HepG2 (cell line): ENCODE measurements at regions of chrX and their contacts with region 1.

Region 1: GRCh38 chrX:10119399-10119990 is 37.3 kb upstream of the CLCN4 start:
- DNase-seq: peak; percentile 64
- ATAC-seq: no peak
- H3K4me3 ChIP-seq: no peak overlapping the region
- H3K27ac ChIP-seq: no peak overlapping the region
- H3K4me1 ChIP-seq: no peaks in the 10 kb centered on the region
- H3K27me3 ChIP-seq: no peaks in the 10 kb centered on the region
- CTCF ChIP-seq: peak; percentile 98
- EP300 ChIP-seq: 0 out of 4 replicates have a peak, but pooled peaks of 1 of the 2 experiments have one; percentile 27
- POLR2A ChIP-seq: no peak
- RAD21 ChIP-seq: peak; percentile 99

Region 2: GRCh38 chrX:9171841-9172463 is 947.5 kb before region 1 on chrX:
- CTCF ChIA-PET with region 1: no interaction called
- POLR2A ChIA-PET with region 1: no interaction called
- in situ Hi-C with region 1: no loop called
- intact Hi-C with region 1: no loop called
- DNase-seq: no peak
- ATAC-seq: no peak
- H3K4me3 ChIP-seq: no peak overlapping the region
- H3K27ac ChIP-seq: no peak overlapping the region
- H3K4me1 ChIP-seq: no peaks in the 10 kb centered on the region
- H3K27me3 ChIP-seq: no peaks in the 10 kb centered on the region
- CTCF ChIP-seq: no peak
- EP300 ChIP-seq: no peak
- POLR2A ChIP-seq: no peak
- RAD21 ChIP-seq: no peak

Region 3: GRCh38 chrX:9873952-9874351 is 245.5 kb before region 1 on chrX:
- CTCF ChIA-PET with region 1: interaction called, 76 read pairs
- POLR2A ChIA-PET with region 1: no interaction called
- in situ Hi-C with region 1: no loop called
- intact Hi-C with region 1: loop called (anchors 2 kb)
- DNase-seq: peak; percentile 24
- ATAC-seq: peak; percentile 75
- H3K4me3 ChIP-seq: no peak overlapping the region
- H3K27ac ChIP-seq: no peak overlapping the region
- H3K4me1 ChIP-seq: no peaks in the 10 kb centered on the region
- H3K27me3 ChIP-seq: no peaks in the 10 kb centered on the region
- CTCF ChIP-seq: peak; percentile 63
- EP300 ChIP-seq: no peak
- POLR2A ChIP-seq: no peak
- RAD21 ChIP-seq: no peak

Region 4: GRCh38 chrX:9988762-9989161 is 130.7 kb before region 1 on chrX:
- CTCF ChIA-PET with region 1: interaction called, 696 read pairs
- POLR2A ChIA-PET with region 1: no interaction called
- in situ Hi-C with region 1: no loop called
- intact Hi-C with region 1: no loop called
- DNase-seq: no peak
- ATAC-seq: no peak
- H3K4me3 ChIP-seq: no peak overlapping the region
- H3K27ac ChIP-seq: no peak overlapping the region
- H3K4me1 ChIP-seq: no peaks in the 10 kb centered on the region
- H3K27me3 ChIP-seq: no peaks in the 10 kb centered on the region
- CTCF ChIP-seq: peak; percentile 48
- EP300 ChIP-seq: no peak
- POLR2A ChIP-seq: no peak
- RAD21 ChIP-seq: 0 out of 2 replicates have a peak, but pooled peaks have one; percentile 21

Region 5: GRCh38 chrX:10007621-10008020 is 111.9 kb before region 1 on chrX:
- CTCF ChIA-PET with region 1: interaction called, 13 read pairs
- POLR2A ChIA-PET with region 1: no interaction called
- in situ Hi-C with region 1: no loop called
- intact Hi-C with region 1: no loop called
- DNase-seq: no peak
- ATAC-seq: peak; percentile 32
- H3K4me3 ChIP-seq: no peak overlapping the region
- H3K27ac ChIP-seq: no peak overlapping the region
- H3K4me1 ChIP-seq: peaks cover 75% of the 10 kb centered on the region
- H3K27me3 ChIP-seq: no peaks in the 10 kb centered on the region
- CTCF ChIP-seq: no peak
- EP300 ChIP-seq: no peak
- POLR2A ChIP-seq: no peak
- RAD21 ChIP-seq: no peak

Region 6: GRCh38 chrX:10156199-10157031 is 36.9 kb after region 1 on chrX and contains the start of gene CLCN4:
- CTCF ChIA-PET with region 1: interaction called, 11 read pairs
- POLR2A ChIA-PET with region 1: no interaction called
- in situ Hi-C with region 1: no loop called
- intact Hi-C with region 1: no loop called
- DNase-seq: peak; percentile 67
- ATAC-seq: peak; percentile 99
- H3K4me3 ChIP-seq: peak within 1 kb of the TSS; percentile 62 to 70 (median 66)
- H3K27ac ChIP-seq: peak within 1 kb of the TSS; percentile 85
- H3K4me1 ChIP-seq: peaks cover 30% of the 10 kb centered on the region
- H3K27me3 ChIP-seq: no peaks in the 10 kb centered on the region
- CTCF ChIP-seq: no peak
- EP300 ChIP-seq: no peak
- POLR2A ChIP-seq: peak; percentile 74 to 76
- RAD21 ChIP-seq: no peak
- total RNA-seq, gene CLCN4: 2.5 and 2.6 TPM in 2 replicates

Region 7: DNA sequence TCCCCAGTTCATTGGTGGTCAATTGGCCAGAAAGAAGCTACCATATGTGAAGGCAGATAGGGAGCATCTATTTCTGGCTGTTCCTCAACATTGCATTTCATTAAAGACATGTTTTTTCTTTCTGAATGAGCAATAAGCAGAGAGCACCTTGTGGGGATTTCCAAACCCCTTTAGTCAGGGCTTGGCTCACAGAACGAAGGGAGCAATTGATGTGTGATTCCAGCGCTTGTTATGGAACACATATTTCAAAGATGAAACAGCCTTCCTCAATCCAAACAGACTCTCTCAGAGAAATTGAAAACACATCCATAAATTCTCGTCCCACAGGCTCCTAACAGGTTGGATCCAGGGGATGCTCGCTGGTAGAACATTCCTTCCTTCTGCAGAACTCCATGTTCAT is 121.4 kb after region 1 on chrX:
- CTCF ChIA-PET with region 1: no interaction called
- POLR2A ChIA-PET with region 1: no interaction called
- in situ Hi-C with region 1: no loop called
- intact Hi-C with region 1: no loop called
- DNase-seq: no peak
- ATAC-seq: no peak
- H3K4me3 ChIP-seq: no peak overlapping the region
- H3K27ac ChIP-seq: no peak overlapping the region
- H3K4me1 ChIP-seq: no peaks in the 10 kb centered on the region
- H3K27me3 ChIP-seq: no peaks in the 10 kb centered on the region
- CTCF ChIP-seq: no peak
- EP300 ChIP-seq: no peak
- POLR2A ChIP-seq: no peak
- RAD21 ChIP-seq: no peak